ENCODE measurements at regions of chr6 and their contacts with region 1.

Region 1: DNA sequence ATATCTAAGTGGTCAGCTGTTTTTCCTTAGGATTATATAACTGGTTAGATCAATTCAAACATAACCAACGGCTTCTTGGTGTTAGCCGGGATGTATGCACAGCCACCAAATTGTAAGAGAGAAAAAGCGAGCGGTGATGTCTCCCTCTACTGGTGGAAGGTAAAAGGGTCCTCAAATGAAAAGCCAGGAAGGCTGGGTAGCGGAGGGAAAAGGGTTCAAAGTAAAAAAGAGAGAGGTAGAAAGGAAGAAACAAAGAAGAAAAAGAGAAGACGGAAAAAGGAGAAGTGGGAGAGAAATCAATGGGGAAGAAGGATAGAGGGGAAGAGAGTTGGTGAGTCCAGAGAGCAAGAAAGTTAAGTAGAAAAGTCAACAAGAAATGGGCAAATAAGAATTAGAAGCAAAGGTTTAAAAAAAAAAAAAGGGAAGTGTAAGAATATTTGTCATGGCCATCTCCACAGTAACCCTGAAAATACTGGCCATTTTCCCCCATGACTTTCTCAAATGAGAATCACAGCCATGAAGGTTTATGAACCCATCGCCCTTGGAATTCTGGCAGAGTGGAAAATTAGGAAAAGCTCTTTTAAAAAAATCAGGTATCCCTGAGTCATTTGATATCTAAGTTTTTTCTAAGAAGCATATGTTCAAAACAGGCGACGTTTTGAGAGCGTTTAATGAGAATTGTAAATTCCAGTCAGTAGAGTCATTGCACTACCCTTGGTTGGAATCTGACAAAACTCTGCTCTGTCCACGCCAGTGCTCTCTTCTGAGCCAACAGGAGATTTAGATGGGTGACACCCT is 155.6 kb upstream of the SNX9 start:
- DNase-seq: peak; percentile 69
- H3K4me3 Mint-ChIP-seq: no peak overlapping the region
- H3K27ac Mint-ChIP-seq: no peak overlapping the region
- H3K4me1 Mint-ChIP-seq: peaks cover 18% of the 10 kb centered on the region
- H3K27me3 Mint-ChIP-seq: peaks cover 32% of the 10 kb centered on the region

Region 2: DNA sequence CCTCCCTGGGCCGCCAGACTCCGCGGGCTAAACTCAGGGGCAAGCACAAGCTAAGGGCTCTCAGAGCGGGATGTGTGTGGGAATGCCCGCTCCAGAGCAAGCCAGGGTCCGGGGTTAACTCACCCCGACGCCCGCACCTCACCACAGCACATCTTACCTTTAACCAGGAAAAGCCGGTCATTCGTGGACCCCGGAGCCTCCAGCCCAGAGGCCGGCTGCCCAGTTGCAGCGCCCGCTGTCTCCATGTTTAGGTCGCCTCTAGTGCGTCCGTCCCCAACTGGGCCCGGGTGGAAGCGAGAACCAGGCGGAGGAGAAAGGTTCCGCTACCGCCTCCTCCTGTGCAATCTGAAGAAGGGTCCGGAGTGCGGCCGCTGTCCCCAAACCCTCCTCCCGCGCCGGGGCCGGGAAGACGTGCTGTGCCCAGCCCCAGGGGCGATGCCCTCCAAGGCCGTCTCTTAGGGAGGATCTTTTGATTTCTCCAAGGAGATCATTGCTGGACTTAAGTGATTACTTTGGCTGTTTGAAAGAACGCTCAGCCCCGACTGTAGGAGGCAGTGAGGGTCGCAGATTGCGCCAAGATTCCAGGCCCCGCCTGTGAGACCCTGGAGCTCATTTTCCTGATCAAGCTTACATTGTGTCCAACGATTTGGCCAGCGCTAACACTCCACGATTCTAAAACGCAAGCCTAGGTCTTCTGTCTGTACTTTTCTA is 344.0 kb before region 1 on chr6 and contains the start of gene TMEM242:
- CTCF ChIA-PET with region 1: interaction called, 25 read pairs
- DNase-seq: peak; percentile 90
- H3K4me3 Mint-ChIP-seq: peak within 1 kb of the TSS; percentile 95
- H3K27ac Mint-ChIP-seq: peak within 1 kb of the TSS; percentile 91
- H3K4me1 Mint-ChIP-seq: peaks cover 37% of the 10 kb centered on the region
- H3K27me3 Mint-ChIP-seq: peaks cover 50% of the 10 kb centered on the region

Region 3: GRCh38 chr6:157946865-157947532 is 279.6 kb after region 1 on chr6:
- CTCF ChIA-PET with region 1: interaction called, 10 read pairs
- DNase-seq: peak; percentile 42
- H3K4me3 Mint-ChIP-seq: no peak overlapping the region
- H3K27ac Mint-ChIP-seq: no peak overlapping the region
- H3K4me1 Mint-ChIP-seq: no peaks in the 10 kb centered on the region
- H3K27me3 Mint-ChIP-seq: peaks cover 19% of the 10 kb centered on the region

Measured in activated naive CD4-positive, alpha-beta T cell treated with anti-CD3 and anti-CD28 coated beads, Interleukin-2, amount 10 ng/mL, durations not matched to agents 7 days and 5 days (primary cell).